HepG2 (cell line): ENCODE measurements at regions of chr17 and their contacts with region 1.

Region 1: DNA sequence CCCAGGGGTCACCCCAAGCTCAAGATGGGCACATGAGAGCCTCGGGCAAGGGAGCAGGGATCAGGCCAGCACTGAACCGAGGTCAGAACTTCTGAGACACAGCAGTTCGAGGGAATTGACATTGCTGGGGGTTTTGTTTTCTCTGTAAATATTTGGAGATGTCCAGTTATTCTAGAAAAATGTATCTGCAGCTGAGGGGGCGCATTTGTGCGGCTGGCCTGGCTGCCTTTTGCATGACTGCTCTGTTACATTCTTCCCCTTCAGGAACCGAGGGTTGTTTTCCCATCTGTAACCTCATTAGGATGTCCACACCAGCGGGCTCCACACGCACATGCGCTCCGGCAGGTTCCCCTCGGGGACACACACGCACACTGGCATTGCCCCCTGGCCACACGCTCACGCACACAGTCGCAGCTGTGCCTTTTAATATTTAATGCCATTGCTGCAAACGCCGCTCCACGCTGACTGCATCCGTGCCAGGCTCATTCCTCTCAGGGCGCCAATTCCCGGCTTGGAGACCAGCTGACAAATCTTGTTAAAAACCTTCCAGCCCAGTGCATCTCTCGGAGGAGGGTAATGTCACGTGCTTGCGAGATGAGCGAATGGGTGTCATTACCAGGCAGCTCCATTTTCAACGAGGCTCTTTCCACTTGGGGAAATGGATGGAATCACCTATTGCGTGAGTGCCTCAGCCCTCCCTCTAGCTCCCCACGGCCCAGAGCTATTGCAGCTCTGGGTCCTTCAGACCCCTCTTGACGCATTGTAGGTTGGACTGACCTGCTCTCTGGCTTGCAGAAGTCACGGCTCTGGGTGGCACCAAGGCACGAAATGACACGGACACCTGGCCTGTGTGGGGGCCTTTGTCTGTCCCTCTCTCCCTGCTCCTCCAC is 13.1 kb downstream of the CCR7 start:
- DNase-seq: peak; percentile 95
- ATAC-seq: peak; percentile 58
- H3K4me3 ChIP-seq: peak overlapping the region in 2 of 3 experiments; percentile 6 to 52; a peak in 3 of 6 replicates
- H3K27ac ChIP-seq: peak overlapping the region; percentile 85
- H3K4me1 ChIP-seq: peaks cover 91% of the 10 kb centered on the region
- H3K27me3 ChIP-seq: no peaks in the 10 kb centered on the region
- CTCF ChIP-seq: peak; percentile 51
- EP300 ChIP-seq: peak in 1 of 2 experiments; percentile 95; a peak in 2 of 4 replicates
- POLR2A ChIP-seq: peak in 1 of 2 experiments; percentile 49; a peak in 1 of 4 replicates
- RAD21 ChIP-seq: no peak; the same call in 1 of the 2 replicates

Region 2: DNA sequence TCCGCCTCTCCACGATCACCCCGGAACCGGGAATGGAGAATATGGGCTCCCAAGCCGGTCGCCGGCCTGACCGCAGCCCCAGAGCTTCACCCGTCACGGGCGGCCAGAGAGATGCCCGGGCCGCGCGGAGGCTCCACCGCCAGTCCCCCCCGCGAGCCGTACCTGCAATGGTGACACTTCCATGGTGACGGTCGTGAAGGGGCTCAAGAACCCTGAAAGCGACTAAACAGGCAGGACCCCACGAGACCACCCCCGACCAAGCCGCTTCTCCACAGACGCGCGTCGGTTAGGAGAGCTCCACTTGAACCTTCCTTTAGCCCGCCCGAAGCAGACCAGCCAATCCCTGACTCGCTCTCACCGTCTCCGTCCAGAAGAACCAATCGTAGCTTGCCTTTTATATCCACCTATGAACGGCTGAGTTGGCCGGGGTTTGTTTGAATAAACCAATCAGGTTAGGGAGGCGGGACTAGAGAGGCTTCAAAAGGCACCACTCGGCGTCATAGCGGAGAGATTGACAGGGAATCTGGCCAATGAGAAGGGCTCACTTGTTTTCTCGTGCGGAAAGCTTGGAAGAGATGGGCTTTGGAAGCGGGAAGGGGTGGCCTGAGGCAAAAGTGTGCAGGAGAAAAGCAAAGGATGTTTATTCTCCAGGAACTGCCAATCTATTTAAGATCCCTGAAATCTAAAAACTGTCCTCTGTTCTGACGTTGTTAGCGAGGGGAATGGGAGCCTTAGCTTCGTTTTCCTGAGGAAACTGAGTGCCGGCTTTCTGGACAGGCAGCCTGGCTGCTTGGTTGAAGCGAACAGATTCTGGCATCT is 134.3 kb before region 1 on chr17 and contains the start of gene TOP2A:
- CTCF ChIA-PET with region 1: no interaction called
- POLR2A ChIA-PET with region 1: interaction called, 12 read pairs
- in situ Hi-C with region 1: no loop called
- intact Hi-C with region 1: no loop called
- DNase-seq: peak; percentile 100
- ATAC-seq: peak; percentile 90
- H3K4me3 ChIP-seq: peak within 1 kb of the TSS; percentile 89 to 98 (median 96)
- H3K27ac ChIP-seq: peak within 1 kb of the TSS; percentile 82
- H3K4me1 ChIP-seq: peaks cover 79% of the 10 kb centered on the region
- H3K27me3 ChIP-seq: no peaks in the 10 kb centered on the region
- CTCF ChIP-seq: no peak
- EP300 ChIP-seq: 0 out of 4 replicates have a peak, but pooled peaks of 1 of the 2 experiments have one; percentile 12
- POLR2A ChIP-seq: peak; percentile 92 to 93
- RAD21 ChIP-seq: no peak; the same call in 1 of the 2 replicates
- total RNA-seq, gene TOP2A: 327 and 614 TPM in 2 replicates

Region 3: DNA sequence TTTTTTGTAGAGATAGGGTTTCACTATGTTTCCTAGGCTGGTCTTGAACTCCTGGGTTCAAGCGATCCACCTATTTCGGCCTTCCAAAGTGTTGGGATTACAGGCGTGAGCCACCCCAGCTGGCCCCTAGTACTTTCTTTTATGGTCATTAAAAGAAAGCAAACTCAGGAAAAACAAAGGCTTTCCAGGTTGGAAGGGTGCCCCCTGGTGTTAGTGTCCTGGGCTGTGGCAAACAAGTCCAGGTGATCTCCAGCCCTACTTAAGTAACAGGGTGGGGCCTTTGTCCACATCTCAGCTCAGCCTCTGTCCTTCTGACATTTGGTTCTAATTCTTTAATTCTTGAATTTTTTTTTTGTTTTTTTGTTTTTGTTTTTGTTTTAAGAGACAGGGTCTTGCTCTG is 101.9 kb before region 1 on chr17:
- CTCF ChIA-PET with region 1: no interaction called
- POLR2A ChIA-PET with region 1: interaction called, 15 read pairs
- in situ Hi-C with region 1: no loop called
- intact Hi-C with region 1: no loop called
- DNase-seq: peak; percentile 54
- ATAC-seq: no peak
- H3K4me3 ChIP-seq: no peak overlapping the region
- H3K27ac ChIP-seq: no peak overlapping the region
- H3K4me1 ChIP-seq: peaks cover 51% of the 10 kb centered on the region
- H3K27me3 ChIP-seq: no peaks in the 10 kb centered on the region
- CTCF ChIP-seq: peak; percentile 72
- EP300 ChIP-seq: no peak
- POLR2A ChIP-seq: no peak
- RAD21 ChIP-seq: peak; percentile 30; the same call in 1 of the 2 replicates

Region 4: GRCh38 chr17:40524235-40524965 is 27.7 kb before region 1 on chr17:
- CTCF ChIA-PET with region 1: no interaction called
- POLR2A ChIA-PET with region 1: interaction called, 10 read pairs
- in situ Hi-C with region 1: no loop called
- intact Hi-C with region 1: no loop called
- DNase-seq: peak; percentile 72
- ATAC-seq: peak; percentile 32; the same call in 1 of the 3 replicates
- H3K4me3 ChIP-seq: no peak overlapping the region; a peak in 1 of 6 replicates
- H3K27ac ChIP-seq: no peak overlapping the region
- H3K4me1 ChIP-seq: peaks cover 41% of the 10 kb centered on the region
- H3K27me3 ChIP-seq: no peaks in the 10 kb centered on the region
- CTCF ChIP-seq: no peak
- EP300 ChIP-seq: peak in 1 of 2 experiments; percentile 48; a peak in 1 of 4 replicates
- POLR2A ChIP-seq: no peak
- RAD21 ChIP-seq: no peak

Region 5: DNA sequence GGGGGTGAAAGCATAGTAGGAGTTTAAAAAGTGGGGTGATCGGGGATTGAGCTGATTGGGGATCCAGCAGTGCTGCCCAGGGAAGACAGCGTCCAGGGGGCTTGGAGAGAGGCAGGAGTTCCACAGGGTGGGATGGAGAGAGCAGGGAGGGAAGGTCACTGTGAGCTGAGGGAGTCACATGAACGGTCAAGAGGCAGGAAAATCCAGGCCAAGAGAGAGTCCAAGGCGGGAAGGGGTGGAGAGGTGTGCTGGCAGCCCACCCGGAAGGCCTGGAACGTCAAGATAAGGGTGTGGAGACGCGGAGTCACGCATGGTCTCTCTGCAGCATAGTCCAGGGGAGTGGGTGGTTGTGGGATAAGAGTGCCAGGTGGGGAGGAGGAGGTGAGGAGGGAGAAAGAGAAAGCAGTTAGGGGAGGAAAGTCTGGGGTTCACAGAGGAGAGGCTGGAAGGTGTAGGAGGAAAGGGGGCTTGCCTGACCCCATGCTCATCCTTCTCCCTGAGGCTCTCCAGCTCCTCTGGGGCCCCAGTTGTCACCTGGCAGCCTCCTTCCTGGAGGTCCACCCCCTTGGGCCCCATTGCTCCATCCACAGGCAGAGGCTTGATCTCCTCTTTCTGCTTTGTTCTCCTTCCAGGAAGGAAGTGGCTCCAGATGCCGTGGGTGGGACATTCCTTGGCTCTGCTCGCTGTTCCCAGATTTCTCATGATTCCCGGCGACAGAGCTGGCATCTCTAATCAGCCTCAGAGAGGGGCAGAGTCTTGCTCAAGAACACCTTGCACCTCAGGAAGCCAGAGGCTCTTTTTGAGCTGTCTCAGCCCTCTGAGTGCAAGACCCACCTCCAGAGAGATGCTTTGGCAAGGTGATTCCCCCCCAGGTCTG is 15.6 kb before region 1 on chr17:
- CTCF ChIA-PET with region 1: interaction called, 3 read pairs
- POLR2A ChIA-PET with region 1: interaction called, 116 read pairs
- in situ Hi-C with region 1: no loop called
- intact Hi-C with region 1: no loop called
- DNase-seq: no peak
- ATAC-seq: no peak
- H3K4me3 ChIP-seq: no peak overlapping the region
- H3K27ac ChIP-seq: no peak overlapping the region
- H3K4me1 ChIP-seq: peaks cover 78% of the 10 kb centered on the region
- H3K27me3 ChIP-seq: no peaks in the 10 kb centered on the region
- CTCF ChIP-seq: no peak
- EP300 ChIP-seq: no peak
- POLR2A ChIP-seq: no peak
- RAD21 ChIP-seq: no peak